CD8-positive, alpha-beta T cell (primary cell): ENCODE measurements at regions of chr1 and their contacts with region 1.

Region 1: GRCh38 chr1:63316984-63317816 is 5.2 kb upstream of the FOXD3 start:
- DNase-seq: peak in 3 of 9 experiments; percentile 41 to 54 (median 50)
- ATAC-seq: peak; percentile 43
- H3K4me3 ChIP-seq: peak overlapping the region in 1 of 2 experiments; percentile 3
- H3K4me3 Mint-ChIP-seq: peak overlapping the region; percentile 40
- H3K27ac ChIP-seq: no peak overlapping the region
- H3K27ac Mint-ChIP-seq: no peak overlapping the region
- H3K4me1 ChIP-seq: peaks cover 16% of the 10 kb centered on the region
- H3K4me1 Mint-ChIP-seq: peaks cover 30% of the 10 kb centered on the region
- H3K27me3 ChIP-seq: peaks cover 49 to 60% of the 10 kb centered on the region in 2 experiments
- H3K27me3 Mint-ChIP-seq: peaks cover 63% of the 10 kb centered on the region
- CTCF ChIP-seq: no peak

Region 2: GRCh38 chr1:63442141-63442475 is 124.9 kb after region 1 on chr1:
- CTCF ChIA-PET with region 1: no interaction called
- POLR2A ChIA-PET with region 1: no interaction called
- intact Hi-C with region 1: loop called in 1 of 2 experiments (anchors 10 kb)
- DNase-seq: no peak
- ATAC-seq: no peak
- H3K4me3 ChIP-seq: no peak overlapping the region
- H3K4me3 Mint-ChIP-seq: no peak overlapping the region
- H3K27ac ChIP-seq: no peak overlapping the region
- H3K27ac Mint-ChIP-seq: no peak overlapping the region
- H3K4me1 ChIP-seq: no peaks in the 10 kb centered on the region
- H3K4me1 Mint-ChIP-seq: no peaks in the 10 kb centered on the region
- H3K27me3 ChIP-seq: no peaks in the 10 kb centered on the region
- H3K27me3 Mint-ChIP-seq: no peaks in the 10 kb centered on the region
- CTCF ChIP-seq: no peak